GM10248 (cell line): ENCODE measurements at regions of chr6 and their contacts with region 1.

Region 1: GRCh38 chr6:89819336-89820130 is at the start of gene MDN1:
- DNase-seq: peak; percentile 92
- CTCF ChIP-seq: no peak

Region 2: GRCh38 chr6:89792873-89793272 is 26.7 kb before region 1 on chr6:
- CTCF ChIA-PET with region 1: interaction called, 10 read pairs
- POLR2A ChIA-PET with region 1: no interaction called
- DNase-seq: peak; percentile 53
- CTCF ChIP-seq: peak; percentile 44

Region 3: DNA sequence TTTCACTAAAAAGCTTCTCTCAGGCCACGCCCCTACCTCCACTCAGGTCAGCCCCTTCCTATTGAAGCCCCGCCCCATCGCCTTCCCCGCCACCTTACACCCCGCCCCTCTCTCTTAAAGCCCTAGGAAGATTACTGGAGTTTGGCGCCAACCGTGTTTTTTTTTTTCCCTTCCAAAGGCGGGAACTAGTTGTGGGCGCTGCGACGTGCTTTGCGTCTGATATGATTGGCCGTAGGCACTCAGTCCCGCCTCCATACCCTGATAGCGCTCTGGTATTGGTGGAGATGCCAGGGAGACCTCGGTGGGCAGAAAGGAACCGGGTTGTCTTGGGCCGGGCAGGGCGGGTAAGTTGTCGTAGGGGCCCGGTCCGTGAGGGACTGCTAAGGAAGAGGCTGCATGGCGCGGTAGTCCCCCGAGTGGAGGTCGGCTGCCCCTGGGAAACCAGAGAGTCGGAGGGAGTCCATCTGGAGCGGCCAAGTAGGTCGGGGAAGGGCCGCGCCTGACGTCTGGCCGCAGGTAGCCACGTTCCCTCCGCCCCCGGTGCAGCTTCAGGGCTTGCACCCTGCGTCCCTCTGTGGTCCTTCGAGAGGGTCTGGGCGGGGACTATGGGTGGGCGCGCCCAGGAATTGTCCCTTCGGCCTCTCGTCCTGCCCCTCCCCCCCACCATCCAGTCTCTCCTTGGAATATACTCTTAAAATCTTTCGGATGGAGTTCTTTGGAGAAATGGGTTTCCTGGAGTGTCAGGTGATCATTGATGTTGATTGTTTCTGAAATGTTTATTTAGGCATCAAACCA is 10.3 kb after region 1 on chr6 and contains the start of gene CASP8AP2:
- CTCF ChIA-PET with region 1: interaction called, 16 read pairs
- POLR2A ChIA-PET with region 1: interaction called, 6 read pairs
- DNase-seq: peak; percentile 94
- CTCF ChIP-seq: no peak